HCT116 (cell line): ENCODE measurements at regions of chr17 and their contacts with region 1.

Region 1: DNA sequence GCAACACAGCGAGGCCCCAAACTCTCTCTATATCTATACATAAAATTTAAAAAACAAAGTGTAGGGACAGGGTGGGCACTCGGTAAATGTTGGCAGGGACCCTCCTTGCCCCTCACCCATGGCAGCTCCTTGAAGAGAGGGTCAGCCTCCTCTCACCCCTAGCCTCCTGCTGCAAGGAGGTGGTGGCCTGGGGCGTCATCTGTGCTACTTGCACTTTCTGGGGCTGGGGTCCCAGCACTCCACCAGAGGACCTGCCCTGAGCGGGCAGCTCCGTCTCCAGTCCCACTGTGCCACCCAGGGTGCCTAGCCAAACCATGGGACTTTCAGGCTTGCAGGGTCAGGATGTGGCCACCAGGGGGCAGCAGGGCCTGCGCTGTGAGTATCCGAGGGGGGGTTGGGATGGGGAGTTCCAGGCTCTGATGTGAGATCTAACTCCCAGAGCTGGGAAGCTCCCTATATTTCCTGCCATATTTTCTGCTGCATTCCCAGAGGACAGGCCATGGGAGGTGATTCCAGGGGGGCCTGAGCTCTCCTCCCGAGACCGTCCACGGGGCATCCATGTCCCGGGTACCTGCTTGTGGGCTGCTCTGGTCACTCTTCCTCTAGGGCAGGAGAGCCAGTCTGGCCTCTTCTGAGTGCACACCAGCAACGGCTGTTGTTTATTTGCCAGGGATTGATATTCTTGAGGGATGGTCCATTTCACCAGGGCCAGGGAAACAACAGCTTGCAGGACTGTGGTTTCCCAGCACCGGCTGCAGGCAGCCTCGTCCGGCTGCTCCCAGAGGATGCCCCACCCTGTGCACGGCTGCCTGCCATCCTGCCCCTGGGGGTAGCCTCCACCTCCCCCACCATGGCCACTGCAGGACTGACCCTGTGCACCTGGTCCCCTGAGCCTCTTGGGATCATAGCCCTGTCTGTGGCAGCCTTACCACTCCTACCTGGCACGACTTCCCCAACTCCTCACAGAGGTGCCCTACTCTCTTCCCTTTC is 1.1 kb downstream of the GPR142 start:
- DNase-seq: peak; percentile 67
- ATAC-seq: peak; percentile 95
- H3K4me3 ChIP-seq: no peak overlapping the region
- H3K27ac ChIP-seq: no peak overlapping the region
- H3K4me1 ChIP-seq: peaks cover 2 to 13% of the 10 kb centered on the region in 2 experiments; a peak in 2 of 4 replicates
- H3K27me3 ChIP-seq: no peaks in the 10 kb centered on the region
- CTCF ChIP-seq: peak; percentile 96 to 100 (median 99)
- POLR2A ChIP-seq: no peak
- RAD21 ChIP-seq: peak; percentile 94

Region 2: DNA sequence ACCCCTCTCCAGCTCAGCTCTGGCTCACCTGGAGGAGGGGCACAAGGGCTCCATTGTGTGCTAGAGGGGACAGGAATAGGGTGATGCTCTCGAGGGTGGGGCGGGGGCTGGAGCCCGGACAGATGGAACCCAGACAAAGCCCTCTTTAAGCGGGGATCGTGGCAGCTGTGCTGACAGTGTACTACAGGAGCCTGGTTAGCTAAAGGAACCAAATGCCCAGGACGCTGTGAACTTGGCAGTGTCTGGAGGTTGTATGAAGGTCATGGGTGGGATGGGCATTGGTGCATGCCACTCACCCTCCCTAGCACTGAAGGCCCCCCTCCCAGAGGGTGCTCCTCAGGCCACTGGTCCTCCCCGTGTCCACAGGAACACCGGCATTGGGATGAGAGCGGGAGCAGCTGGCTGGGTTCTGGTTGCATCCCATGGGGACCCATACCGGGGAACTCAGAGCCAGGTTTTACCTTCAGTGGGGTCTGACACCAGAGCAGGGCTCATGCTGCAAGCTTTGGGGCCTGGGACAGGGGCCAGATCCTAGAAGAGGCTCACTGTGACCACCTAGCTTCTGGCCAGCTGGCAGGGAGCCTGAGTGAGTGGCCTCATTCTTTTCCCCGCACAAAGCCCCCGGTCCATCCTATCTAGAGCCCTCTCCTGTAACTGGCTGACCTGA is 30.4 kb before region 1 on chr17:
- CTCF ChIA-PET with region 1: no interaction called
- POLR2A ChIA-PET with region 1: no interaction called
- RAD21 ChIA-PET with region 1: no interaction called
- intact Hi-C with region 1: no loop called
- DNase-seq: no peak
- ATAC-seq: no peak
- H3K4me3 ChIP-seq: no peak overlapping the region
- H3K27ac ChIP-seq: no peak overlapping the region
- H3K4me1 ChIP-seq: no peaks in the 10 kb centered on the region
- H3K27me3 ChIP-seq: no peaks in the 10 kb centered on the region; the same call in 1 of the 2 replicates
- CTCF ChIP-seq: no peak
- POLR2A ChIP-seq: no peak
- RAD21 ChIP-seq: no peak

Region 3: GRCh38 chr17:74354123-74354522 is 14.3 kb before region 1 on chr17:
- CTCF ChIA-PET with region 1: interaction called, 16 read pairs
- POLR2A ChIA-PET with region 1: no interaction called
- RAD21 ChIA-PET with region 1: no interaction called
- intact Hi-C with region 1: no loop called
- DNase-seq: peak; percentile 74
- ATAC-seq: peak; percentile 98
- H3K4me3 ChIP-seq: peak overlapping the region; percentile 19 to 33; a peak in 3 of 4 replicates
- H3K27ac ChIP-seq: no peak overlapping the region; the same call in 1 of the 2 replicates
- H3K4me1 ChIP-seq: peaks cover 7 to 14% of the 10 kb centered on the region in 2 experiments; a peak in 3 of 4 replicates
- H3K27me3 ChIP-seq: no peaks in the 10 kb centered on the region
- CTCF ChIP-seq: peak; percentile 100
- POLR2A ChIP-seq: no peak
- RAD21 ChIP-seq: peak; percentile 75

Region 4: GRCh38 chr17:74457146-74457819 is 88.9 kb after region 1 on chr17:
- CTCF ChIA-PET with region 1: interaction called, 43 read pairs
- POLR2A ChIA-PET with region 1: interaction called, 7 read pairs
- RAD21 ChIA-PET with region 1: interaction called, 5 to 6 read pairs
- intact Hi-C with region 1: loop called (anchors 1 kb)
- DNase-seq: peak; percentile 63
- ATAC-seq: peak; percentile 56
- H3K4me3 ChIP-seq: no peak overlapping the region
- H3K27ac ChIP-seq: no peak overlapping the region
- H3K4me1 ChIP-seq: peaks cover 22 to 29% of the 10 kb centered on the region in 2 experiments
- H3K27me3 ChIP-seq: no peaks in the 10 kb centered on the region
- CTCF ChIP-seq: peak; percentile 97 to 100 (median 99)
- POLR2A ChIP-seq: no peak
- RAD21 ChIP-seq: peak; percentile 100

Region 5: DNA sequence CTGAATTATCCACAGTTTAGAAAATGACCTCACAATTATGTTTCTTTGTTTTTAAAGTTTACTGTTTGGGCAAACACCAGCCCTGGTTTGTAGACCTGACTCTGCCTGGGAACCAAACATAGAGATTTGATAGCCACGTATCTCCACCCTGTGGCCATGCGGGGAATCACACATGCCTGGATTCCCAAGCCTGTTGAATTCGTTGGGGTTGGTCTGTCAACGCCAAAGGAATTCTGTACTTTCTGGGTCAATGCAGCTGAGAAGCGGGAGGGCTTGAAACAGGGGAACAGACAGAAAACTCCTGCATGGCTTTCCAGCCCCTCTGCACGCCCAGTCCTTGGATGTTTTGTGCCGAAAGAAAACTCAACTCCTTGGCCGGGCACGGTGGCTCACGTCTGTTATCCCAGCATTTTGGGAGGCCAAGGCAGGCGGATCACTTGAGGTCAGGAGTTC is 125.0 kb after region 1 on chr17:
- CTCF ChIA-PET with region 1: interaction called, 10 read pairs
- POLR2A ChIA-PET with region 1: no interaction called
- RAD21 ChIA-PET with region 1: interaction called, 3 to 4 read pairs
- intact Hi-C with region 1: loop called (anchors 1 kb)
- DNase-seq: peak; percentile 73
- ATAC-seq: peak; percentile 98
- H3K4me3 ChIP-seq: no peak overlapping the region
- H3K27ac ChIP-seq: no peak overlapping the region
- H3K4me1 ChIP-seq: no peaks in the 10 kb centered on the region
- H3K27me3 ChIP-seq: no peaks in the 10 kb centered on the region
- CTCF ChIP-seq: peak; percentile 97 to 99 (median 97)
- POLR2A ChIP-seq: no peak
- RAD21 ChIP-seq: peak; percentile 97

Region 6: GRCh38 chr17:74528491-74529199 is 160.3 kb after region 1 on chr17:
- CTCF ChIA-PET with region 1: interaction called, 49 read pairs
- POLR2A ChIA-PET with region 1: no interaction called
- RAD21 ChIA-PET with region 1: interaction called, 3 read pairs
- intact Hi-C with region 1: loop called (anchors 2 kb)
- DNase-seq: no peak
- ATAC-seq: no peak
- H3K4me3 ChIP-seq: no peak overlapping the region
- H3K27ac ChIP-seq: no peak overlapping the region
- H3K4me1 ChIP-seq: no peaks in the 10 kb centered on the region
- H3K27me3 ChIP-seq: peaks cover 60% of the 10 kb centered on the region
- CTCF ChIP-seq: no peak
- POLR2A ChIP-seq: no peak
- RAD21 ChIP-seq: no peak